H1 (cell line): ENCODE measurements at regions of chr14 and their contacts with region 1.

Region 1: GRCh38 chr14:100317912-100318808 is 5.0 kb upstream of the SLC25A47 start:
- DNase-seq: peak; percentile 44 to 92
- H3K4me3 ChIP-seq: no peak overlapping the region
- H3K27ac ChIP-seq: no peak overlapping the region
- H3K4me1 ChIP-seq: peaks cover 0 to 2% (median 0%) of the 10 kb centered on the region in 4 experiments; a peak in 3 of 7 replicates
- H3K27me3 ChIP-seq: no peaks in the 10 kb centered on the region; a peak in 2 of 7 replicates
- CTCF ChIP-seq: peak in 2 of 3 experiments; percentile 76 to 82; a peak in 3 of 4 replicates
- EP300 ChIP-seq: no peak
- POLR2A ChIP-seq: no peak
- RAD21 ChIP-seq: peak; percentile 42 to 66; a peak in 3 of 4 replicates

Region 2: GRCh38 chr14:100306420-100307219 is 11.5 kb before region 1 on chr14 and contains the start of gene SLC25A29:
- CTCF ChIA-PET with region 1: interaction called, 13 read pairs
- POLR2A ChIA-PET with region 1: interaction called, 10 read pairs
- DNase-seq: peak in 1 of 2 experiments; percentile 89
- H3K4me3 ChIP-seq: peak within 1 kb of the TSS; percentile 70 to 95 (median 81)
- H3K27ac ChIP-seq: peak within 1 kb of the TSS; percentile 74
- H3K4me1 ChIP-seq: peaks cover 10 to 29% (median 19%) of the 10 kb centered on the region in 4 experiments
- H3K27me3 ChIP-seq: no peaks in the 10 kb centered on the region; a peak in 1 of 7 replicates
- CTCF ChIP-seq: no peak
- EP300 ChIP-seq: no peak
- POLR2A ChIP-seq: peak in 1 of 2 experiments; percentile 56; a peak in 2 of 3 replicates
- RAD21 ChIP-seq: no peak; a peak in 1 of 4 replicates
- total RNA-seq, gene SLC25A29: 135 TPM in 2 replicates

Region 3: GRCh38 chr14:100332797-100333196 is 14.6 kb after region 1 on chr14:
- CTCF ChIA-PET with region 1: interaction called, 4 read pairs
- POLR2A ChIA-PET with region 1: interaction called, 22 read pairs
- DNase-seq: no peak
- H3K4me3 ChIP-seq: no peak overlapping the region
- H3K27ac ChIP-seq: no peak overlapping the region
- H3K4me1 ChIP-seq: 0 out of 7 replicates have a peak, but pooled peaks cover 0 to 4% (median 0%) of the 10 kb centered on the region in 4 experiments
- H3K27me3 ChIP-seq: no peaks in the 10 kb centered on the region
- CTCF ChIP-seq: no peak
- EP300 ChIP-seq: no peak
- POLR2A ChIP-seq: no peak
- RAD21 ChIP-seq: no peak